Sigmoid colon (tissue), 7 donors: ENCODE measurements at regions of chr10 and their contacts with region 1.

Region 1: DNA sequence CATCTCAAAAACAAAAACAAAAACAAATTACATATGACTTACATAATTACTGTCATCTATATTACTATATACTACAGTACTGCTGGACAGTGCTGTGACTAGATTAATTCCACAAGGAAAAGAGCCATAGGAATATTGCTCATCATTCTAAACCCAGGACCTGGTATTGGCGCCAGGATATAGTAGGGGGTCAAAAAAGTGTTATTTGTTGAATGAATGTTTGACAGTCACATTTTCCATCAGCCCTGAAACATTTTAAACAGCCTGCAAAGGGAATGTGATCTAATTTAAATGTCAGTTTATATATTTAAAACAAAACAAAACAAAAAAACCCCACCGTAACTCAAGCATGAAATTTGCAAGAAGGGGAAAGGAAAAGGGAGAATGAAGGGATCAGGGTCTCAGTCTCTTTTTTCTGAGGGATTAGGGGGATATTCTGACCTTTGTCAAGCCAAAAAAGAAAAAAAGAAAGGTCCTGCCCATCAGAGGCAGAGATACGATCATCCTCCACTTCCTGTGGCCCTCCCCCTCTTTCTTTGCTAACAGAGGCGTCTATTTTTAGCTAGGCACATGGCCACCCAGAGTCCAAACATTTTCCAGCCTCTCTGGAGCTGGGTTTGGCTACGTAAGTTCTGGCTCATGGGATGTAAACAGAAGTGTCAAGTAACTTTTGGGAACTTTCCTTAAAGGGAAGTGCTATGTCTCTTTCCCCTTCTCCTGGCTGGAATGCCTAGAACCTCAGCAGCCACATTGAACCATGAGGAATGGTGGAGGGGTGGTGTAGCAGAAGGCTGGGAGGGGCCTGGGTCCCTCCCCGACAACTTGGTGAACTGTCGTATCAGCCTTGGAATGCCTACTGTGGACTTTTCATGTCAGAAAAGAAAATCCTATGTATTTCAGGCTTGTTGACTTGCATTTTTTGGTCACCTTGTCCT is 44.6 kb upstream of the DLG5 start:
- DNase-seq: peak; percentile 97
- H3K4me3 ChIP-seq: peak overlapping the region in 1 of 4 donors; percentile 14
- H3K27ac ChIP-seq: peak overlapping the region; percentile 79 to 93 (median 90)
- H3K4me1 ChIP-seq: peaks cover 0 to 62% (median 56%) of the 10 kb centered on the region in 4 donors
- H3K27me3 ChIP-seq: no peaks in the 10 kb centered on the region
- CTCF ChIP-seq: no peak
- EP300 ChIP-seq: peak; percentile 96 to 99 (median 97)
- POLR2A ChIP-seq: no peak

Region 2: DNA sequence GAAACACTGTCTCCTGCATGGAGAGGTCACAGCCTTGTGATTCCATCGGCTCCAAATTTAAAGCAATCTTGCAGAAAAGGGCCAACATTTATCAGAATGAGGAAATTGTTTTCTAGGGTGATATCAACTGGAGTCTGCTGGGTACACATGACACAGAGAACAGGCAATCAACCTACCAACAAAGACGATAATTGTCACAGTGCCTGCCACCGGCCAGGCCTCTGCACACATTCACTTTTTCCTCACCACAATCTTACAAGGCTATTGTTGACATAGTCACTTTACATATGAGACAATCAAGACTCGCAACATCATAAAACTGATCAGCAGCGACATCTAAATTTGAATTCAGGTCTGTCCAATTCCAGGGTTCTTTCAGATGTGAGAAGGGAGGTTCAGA is 522.9 kb before region 1 on chr10:
- intact Hi-C with region 1: no loop called
- DNase-seq: no peak
- H3K4me3 ChIP-seq: no peak overlapping the region
- H3K27ac ChIP-seq: peak overlapping the region in 1 of 4 donors; percentile 17
- H3K4me1 ChIP-seq: peaks cover 0 to 49% (median 18%) of the 10 kb centered on the region in 4 donors
- H3K27me3 ChIP-seq: no peaks in the 10 kb centered on the region
- CTCF ChIP-seq: no peak
- EP300 ChIP-seq: no peak
- POLR2A ChIP-seq: no peak

Region 3: DNA sequence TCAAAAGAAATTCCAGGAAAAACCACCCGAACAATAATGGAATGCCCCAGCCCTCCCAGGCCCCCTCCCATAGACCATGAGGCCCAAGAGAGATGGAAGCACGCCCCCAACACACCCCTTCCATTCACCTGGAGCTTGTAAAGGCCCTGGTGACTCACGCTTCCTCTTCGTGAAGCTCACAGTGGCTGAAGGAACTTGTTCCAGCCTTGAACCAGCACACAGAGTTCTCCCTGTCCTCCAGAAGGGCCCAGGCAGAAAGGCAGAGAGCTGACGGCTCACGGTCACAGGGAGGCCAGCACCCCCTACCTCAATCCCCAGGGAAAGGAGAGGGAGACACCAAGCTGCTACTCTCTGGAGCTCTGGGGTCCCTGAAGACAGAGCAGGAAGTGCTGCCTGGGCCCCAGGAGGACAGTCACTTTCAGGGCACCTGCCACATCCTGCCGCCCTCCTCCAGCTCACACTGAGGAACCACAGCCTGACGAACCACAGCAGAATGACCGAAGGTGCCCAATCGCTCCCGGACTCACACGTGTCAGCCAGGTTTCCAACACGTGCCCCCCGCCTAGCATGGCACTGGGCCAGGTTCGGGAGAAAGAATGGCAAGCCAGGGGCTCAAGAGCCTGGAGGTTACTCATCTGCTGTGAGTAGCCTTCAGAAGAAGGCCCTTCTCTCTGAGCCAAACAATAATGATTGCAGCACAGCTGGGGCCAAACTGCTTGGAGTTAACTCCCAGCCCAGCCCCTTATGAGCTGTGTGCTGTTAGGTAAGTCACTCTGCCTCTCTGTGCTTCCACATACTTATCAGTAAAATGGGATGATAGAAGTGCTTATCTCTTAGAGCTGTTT is 97.4 kb before region 1 on chr10:
- intact Hi-C with region 1: loop called (anchors 10 kb)
- DNase-seq: peak; percentile 91
- H3K4me3 ChIP-seq: no peak overlapping the region
- H3K27ac ChIP-seq: peak overlapping the region; percentile 80 to 91 (median 83)
- H3K4me1 ChIP-seq: peaks cover 0 to 87% (median 83%) of the 10 kb centered on the region in 4 donors
- H3K27me3 ChIP-seq: no peaks in the 10 kb centered on the region
- CTCF ChIP-seq: no peak
- EP300 ChIP-seq: peak; percentile 36 to 97 (median 82)
- POLR2A ChIP-seq: no peak